AG04449 (cell line): ENCODE measurements at regions of chr3 and their contacts with region 1.

Region 1: DNA sequence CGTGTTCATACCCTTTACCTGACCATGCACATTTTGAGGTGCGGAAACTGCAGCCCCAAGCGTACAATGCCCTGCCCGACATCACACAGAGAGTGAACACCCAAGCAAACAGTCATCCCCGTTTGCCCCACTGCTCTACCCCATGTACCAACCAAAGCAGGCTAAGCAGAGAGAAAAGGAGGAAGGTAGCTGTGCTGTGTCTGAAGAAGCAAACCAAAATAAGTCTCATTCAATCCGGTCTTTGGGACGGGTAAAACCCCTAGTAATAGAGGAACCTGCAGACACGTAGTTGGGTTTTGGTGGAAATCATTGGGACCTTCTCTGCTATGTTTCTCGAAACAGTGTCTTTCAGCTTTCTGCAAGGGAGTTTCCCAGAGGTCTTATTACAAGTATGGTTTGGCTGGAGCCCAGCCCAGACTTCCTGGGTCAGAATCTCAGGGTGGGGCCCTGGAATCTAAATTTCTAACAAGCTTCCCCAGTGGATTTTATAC is 164.6 kb upstream of the HES1 start:
- DNase-seq: no peak
- H3K4me3 ChIP-seq: no peak overlapping the region
- CTCF ChIP-seq: no peak

Region 2: DNA sequence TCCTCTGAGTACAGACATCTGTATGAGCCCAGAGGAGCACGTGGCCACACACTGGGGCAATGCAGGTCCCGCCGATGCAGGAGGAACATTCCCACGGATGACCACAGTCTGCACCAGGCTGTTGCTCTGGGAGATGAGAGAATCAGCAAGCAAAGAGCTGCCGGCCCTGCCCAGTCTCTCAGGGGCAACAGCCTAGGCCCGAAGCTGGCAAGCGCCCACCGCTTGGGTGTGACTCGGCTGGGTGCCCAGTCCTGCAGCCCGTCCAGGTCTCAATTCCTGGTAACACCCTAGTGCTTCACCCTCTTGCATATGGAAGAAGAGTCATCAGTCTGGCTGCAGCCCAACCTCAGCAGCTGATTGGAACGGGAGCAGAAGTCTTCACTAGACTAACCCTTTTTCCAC is 11.0 kb after region 1 on chr3:
- CTCF ChIA-PET with region 1: interaction called, 13 read pairs
- POLR2A ChIA-PET with region 1: no interaction called
- DNase-seq: no peak
- H3K4me3 ChIP-seq: no peak overlapping the region
- CTCF ChIP-seq: no peak

Region 3: GRCh38 chr3:194070634-194071409 is 99.5 kb after region 1 on chr3:
- CTCF ChIA-PET with region 1: no interaction called
- POLR2A ChIA-PET with region 1: no interaction called
- DNase-seq: no peak
- H3K4me3 ChIP-seq: peak overlapping the region; percentile 57
- CTCF ChIP-seq: no peak

Region 4: DNA sequence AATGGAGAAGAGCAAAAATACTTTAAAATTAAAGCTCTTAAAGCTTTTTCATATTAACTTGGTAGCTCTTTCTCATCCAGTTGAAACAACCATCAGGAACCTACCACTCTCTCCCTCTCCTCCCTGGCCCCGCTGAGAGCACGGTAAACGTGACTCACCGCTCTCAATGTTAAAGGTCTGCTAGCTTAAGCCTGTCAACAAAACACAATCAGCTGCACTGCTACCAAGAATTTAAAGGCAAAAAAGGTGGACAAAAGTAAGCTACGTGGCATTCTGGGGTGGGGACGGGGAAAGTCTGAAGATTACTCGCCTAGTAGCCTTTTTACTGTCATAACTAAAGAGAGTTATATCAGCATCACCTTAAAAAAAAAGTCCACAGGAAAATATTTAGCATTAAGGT is 436.1 kb after region 1 on chr3:
- CTCF ChIA-PET with region 1: no interaction called
- POLR2A ChIA-PET with region 1: no interaction called
- DNase-seq: no peak
- H3K4me3 ChIP-seq: no peak overlapping the region
- CTCF ChIP-seq: no peak